H1 (cell line): ENCODE measurements at regions of chr15 and their contacts with region 1.

Region 1: DNA sequence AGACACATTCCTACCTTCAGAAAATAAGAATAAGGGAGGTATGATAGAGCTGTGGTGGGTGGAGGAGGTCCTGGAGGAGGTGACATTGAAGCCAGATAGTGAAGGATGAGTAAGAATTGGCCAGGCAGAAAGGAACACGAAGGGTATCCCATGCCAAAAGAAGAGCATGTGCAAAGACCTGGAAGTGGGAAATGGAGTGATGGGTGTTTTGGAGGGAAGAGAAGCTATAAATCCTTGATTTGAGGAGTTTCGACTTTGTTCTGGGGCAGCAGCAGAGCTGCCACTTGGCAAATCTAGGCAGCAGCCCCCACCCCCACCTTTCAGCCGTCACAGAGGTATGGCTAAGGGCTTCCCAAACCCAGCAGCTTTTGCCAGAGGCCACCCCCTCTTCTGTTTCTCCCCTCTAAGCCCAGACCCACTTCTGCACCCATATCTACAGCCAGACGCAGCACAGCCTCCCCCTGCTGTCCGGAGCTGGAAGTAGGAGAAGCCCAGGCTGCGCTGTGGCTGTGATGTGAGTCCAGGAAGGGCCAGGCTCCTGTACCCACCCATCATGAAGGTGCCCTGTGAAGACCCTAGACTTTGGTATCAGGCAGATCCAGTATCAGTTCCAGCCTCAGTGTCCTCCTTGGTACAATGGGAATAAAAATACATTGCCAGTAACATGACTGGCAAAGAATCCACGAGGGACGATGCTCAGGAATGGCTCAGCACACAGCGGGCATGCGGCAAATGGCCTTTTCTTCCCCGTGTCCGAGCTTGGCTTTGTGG is 188.7 kb upstream of the LINGO1 start:
- DNase-seq: peak; percentile 41 to 87
- H3K4me3 ChIP-seq: no peak overlapping the region
- H3K27ac ChIP-seq: no peak overlapping the region
- H3K4me1 ChIP-seq: peaks cover 0 to 18% (median 11%) of the 10 kb centered on the region in 4 experiments; a peak in 6 of 7 replicates
- H3K27me3 ChIP-seq: peaks cover 23 to 42% (median 39%) of the 10 kb centered on the region in 4 experiments
- CTCF ChIP-seq: peak; percentile 94 to 98 (median 95)
- EP300 ChIP-seq: no peak
- POLR2A ChIP-seq: no peak
- RAD21 ChIP-seq: peak; percentile 92 to 96

Region 2: GRCh38 chr15:77607111-77607893 is 214.1 kb before region 1 on chr15:
- CTCF ChIA-PET with region 1: interaction called, 27 read pairs
- POLR2A ChIA-PET with region 1: no interaction called
- DNase-seq: no peak
- H3K4me3 ChIP-seq: no peak overlapping the region
- H3K27ac ChIP-seq: no peak overlapping the region
- H3K4me1 ChIP-seq: peaks cover 4 to 41% (median 22%) of the 10 kb centered on the region in 4 experiments
- H3K27me3 ChIP-seq: no peaks in the 10 kb centered on the region
- CTCF ChIP-seq: no peak
- EP300 ChIP-seq: no peak
- POLR2A ChIP-seq: no peak
- RAD21 ChIP-seq: no peak

Region 3: DNA sequence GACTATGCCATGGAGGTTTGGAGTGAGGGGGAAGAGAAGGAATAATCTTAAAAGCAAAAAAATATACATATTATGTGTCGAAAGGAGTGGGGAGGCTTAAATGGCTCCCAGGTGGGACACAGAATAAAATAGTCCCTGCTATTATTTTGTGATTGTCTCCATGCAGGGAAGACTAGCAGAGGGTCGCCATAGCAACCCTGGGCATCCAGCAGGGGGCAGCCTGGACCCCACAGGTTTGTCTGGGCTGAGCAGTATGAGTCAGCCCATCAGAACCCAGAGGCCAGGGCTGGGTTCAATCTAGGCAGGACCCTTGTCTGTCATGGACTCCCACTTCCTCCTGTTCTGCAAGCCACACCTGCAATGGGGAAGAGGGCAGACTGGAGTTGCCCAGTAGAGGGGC is 171.1 kb before region 1 on chr15:
- CTCF ChIA-PET with region 1: interaction called, 158 read pairs
- POLR2A ChIA-PET with region 1: interaction called, 4 read pairs
- DNase-seq: peak in 1 of 2 experiments; percentile 85
- H3K4me3 ChIP-seq: no peak overlapping the region
- H3K27ac ChIP-seq: no peak overlapping the region
- H3K4me1 ChIP-seq: peaks cover 0 to 13% (median under 1%) of the 10 kb centered on the region in 4 experiments; a peak in 5 of 7 replicates
- H3K27me3 ChIP-seq: no peaks in the 10 kb centered on the region
- CTCF ChIP-seq: peak; percentile 72 to 81 (median 78)
- EP300 ChIP-seq: no peak
- POLR2A ChIP-seq: no peak
- RAD21 ChIP-seq: peak; percentile 72 to 74

Region 4: GRCh38 chr15:77702211-77702957 is 119.0 kb before region 1 on chr15:
- CTCF ChIA-PET with region 1: interaction called, 19 read pairs
- POLR2A ChIA-PET with region 1: no interaction called
- DNase-seq: peak; percentile 25 to 88
- H3K4me3 ChIP-seq: no peak overlapping the region
- H3K27ac ChIP-seq: no peak overlapping the region
- H3K4me1 ChIP-seq: peaks cover 0 to 8% (median 0%) of the 10 kb centered on the region in 4 experiments; a peak in 2 of 7 replicates
- H3K27me3 ChIP-seq: no peaks in the 10 kb centered on the region
- CTCF ChIP-seq: no peak
- EP300 ChIP-seq: no peak
- POLR2A ChIP-seq: no peak
- RAD21 ChIP-seq: peak; percentile 21 to 45; a peak in 3 of 4 replicates

Region 5: GRCh38 chr15:77747175-77748077 is 73.9 kb before region 1 on chr15:
- CTCF ChIA-PET with region 1: interaction called, 21 read pairs
- POLR2A ChIA-PET with region 1: no interaction called
- DNase-seq: no peak
- H3K4me3 ChIP-seq: no peak overlapping the region
- H3K27ac ChIP-seq: no peak overlapping the region
- H3K4me1 ChIP-seq: peaks cover 9 to 20% (median 14%) of the 10 kb centered on the region in 4 experiments
- H3K27me3 ChIP-seq: peaks cover 0 to 9% (median 0%) of the 10 kb centered on the region in 4 experiments; a peak in 2 of 7 replicates
- CTCF ChIP-seq: no peak
- EP300 ChIP-seq: no peak
- POLR2A ChIP-seq: no peak
- RAD21 ChIP-seq: no peak

Region 6: GRCh38 chr15:77791941-77792340 is 29.4 kb before region 1 on chr15:
- CTCF ChIA-PET with region 1: interaction called, 40 read pairs
- POLR2A ChIA-PET with region 1: no interaction called
- DNase-seq: no peak
- H3K4me3 ChIP-seq: no peak overlapping the region
- H3K27ac ChIP-seq: no peak overlapping the region
- H3K4me1 ChIP-seq: no peaks in the 10 kb centered on the region
- H3K27me3 ChIP-seq: no peaks in the 10 kb centered on the region
- CTCF ChIP-seq: no peak
- EP300 ChIP-seq: no peak
- POLR2A ChIP-seq: no peak
- RAD21 ChIP-seq: no peak

Region 7: DNA sequence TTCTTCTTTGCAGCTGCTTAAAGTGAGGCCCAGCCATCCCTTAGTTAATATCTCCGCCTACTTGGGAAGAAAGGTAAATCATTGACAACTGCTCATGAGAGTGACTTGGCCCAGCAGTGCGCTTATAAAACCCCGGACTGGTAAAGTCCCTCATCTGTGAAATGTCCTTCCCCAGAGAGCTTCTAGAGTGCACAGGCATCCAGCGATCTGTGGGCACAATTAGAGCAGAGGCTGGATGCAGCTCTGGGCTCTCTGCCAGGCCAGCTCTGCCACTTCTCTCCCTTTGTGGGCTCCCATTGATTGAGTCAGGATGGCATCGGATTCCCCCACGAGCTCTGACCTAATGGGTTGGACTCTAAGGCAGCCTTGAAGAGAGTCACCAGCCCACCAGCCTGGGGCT is 30.3 kb after region 1 on chr15:
- CTCF ChIA-PET with region 1: interaction called, 15 read pairs
- POLR2A ChIA-PET with region 1: no interaction called
- DNase-seq: no peak
- H3K4me3 ChIP-seq: no peak overlapping the region
- H3K27ac ChIP-seq: no peak overlapping the region
- H3K4me1 ChIP-seq: no peaks in the 10 kb centered on the region
- H3K27me3 ChIP-seq: peaks cover 0 to 3% (median 0%) of the 10 kb centered on the region in 4 experiments; a peak in 2 of 7 replicates
- CTCF ChIP-seq: no peak
- EP300 ChIP-seq: no peak
- POLR2A ChIP-seq: no peak
- RAD21 ChIP-seq: no peak

Region 8: DNA sequence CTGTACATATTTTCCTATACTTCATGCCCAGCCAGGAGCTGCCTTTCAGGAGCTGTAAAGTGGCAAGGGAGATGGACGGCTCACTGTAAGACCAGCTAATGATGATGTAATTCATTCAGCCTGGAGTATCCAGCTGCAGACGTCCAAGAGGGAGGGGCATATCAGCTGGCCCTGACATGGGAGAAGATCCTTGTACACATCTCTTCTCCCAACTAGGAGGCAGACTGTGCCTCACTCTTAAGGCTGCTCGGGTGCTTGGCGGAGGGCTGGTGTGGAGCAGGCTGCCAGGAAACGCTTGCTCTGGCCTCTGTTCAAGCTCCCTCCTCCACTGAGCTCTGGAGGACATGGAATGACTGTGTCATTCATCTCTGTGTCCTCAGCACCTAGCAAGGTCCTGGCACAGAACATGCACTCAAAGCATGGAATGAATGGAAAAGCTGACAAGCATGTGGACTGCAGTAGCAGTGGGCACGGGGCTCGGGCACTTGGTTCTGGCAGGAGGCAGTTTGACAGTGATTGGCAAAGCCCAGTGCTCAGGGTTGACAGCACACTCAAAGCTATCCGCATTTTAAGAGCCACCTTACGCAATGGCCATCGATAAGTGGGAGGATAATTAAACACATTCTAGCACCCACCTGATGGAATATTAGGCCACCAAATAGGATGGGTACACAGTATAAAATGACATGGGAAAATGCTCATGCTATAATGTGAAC is 183.7 kb after region 1 on chr15:
- CTCF ChIA-PET with region 1: no interaction called
- POLR2A ChIA-PET with region 1: no interaction called
- DNase-seq: no peak
- H3K4me3 ChIP-seq: no peak overlapping the region
- H3K27ac ChIP-seq: no peak overlapping the region
- H3K4me1 ChIP-seq: peaks cover 0 to 4% (median 0%) of the 10 kb centered on the region in 4 experiments; a peak in 3 of 7 replicates
- H3K27me3 ChIP-seq: no peaks in the 10 kb centered on the region
- CTCF ChIP-seq: no peak
- EP300 ChIP-seq: no peak
- POLR2A ChIP-seq: no peak
- RAD21 ChIP-seq: no peak